Panc1 (cell line): ENCODE measurements at regions of chr10 and their contacts with region 1.

Region 1: DNA sequence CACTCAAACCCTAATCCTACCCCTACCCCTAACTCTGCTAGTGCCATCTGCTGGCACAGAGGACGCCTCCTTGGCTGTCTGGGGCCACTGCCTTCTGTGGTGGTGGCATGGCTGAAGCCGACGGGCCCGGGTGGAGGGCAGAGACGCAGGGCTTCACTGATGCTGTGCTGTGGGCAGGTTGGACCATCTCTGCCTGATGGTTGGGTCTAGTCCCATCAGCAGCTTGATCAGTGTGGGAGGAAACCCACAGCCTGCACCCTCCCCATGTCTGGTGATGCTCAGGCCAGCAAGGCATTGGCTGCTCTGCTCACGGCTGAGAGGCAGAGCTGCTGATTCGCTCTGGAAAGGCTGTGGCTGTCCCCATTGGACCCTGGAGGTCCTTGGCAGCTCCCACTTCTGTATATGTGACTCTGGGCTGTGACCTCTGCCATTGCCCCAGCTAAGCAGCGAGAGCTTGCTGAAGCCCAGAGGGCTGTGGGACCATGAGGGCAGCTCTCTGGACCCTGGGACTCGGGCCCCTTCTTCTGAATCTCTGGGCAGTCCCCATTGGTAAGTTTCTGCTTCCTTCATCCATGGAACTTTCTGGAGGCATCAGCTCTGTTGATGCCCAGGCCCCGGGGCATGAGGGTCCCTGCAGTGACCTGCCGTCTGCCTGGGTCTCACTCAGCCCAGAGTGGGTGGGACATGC is at the start of gene SCART1:
- DNase-seq: no peak
- ATAC-seq: no peak; the same call in 1 of the 2 replicates
- H3K4me3 ChIP-seq: no peak within 1 kb of the TSS
- H3K27ac ChIP-seq: no peak within 1 kb of the TSS
- H3K4me1 ChIP-seq: no peaks in the 10 kb centered on the region
- H3K27me3 ChIP-seq: no peaks in the 10 kb centered on the region; the same call in 1 of the 2 replicates
- CTCF ChIP-seq: no peak
- total RNA-seq, gene SCART1: 0.57 TPM

Region 2: GRCh38 chr10:133557527-133557926 is 103.9 kb after region 1 on chr10:
- CTCF ChIA-PET with region 1: no interaction called
- POLR2A ChIA-PET with region 1: interaction called, 10 read pairs
- in situ Hi-C with region 1: no loop called
- intact Hi-C with region 1: no loop called
- DNase-seq: no peak
- ATAC-seq: no peak
- H3K4me3 ChIP-seq: no peak overlapping the region
- H3K27ac ChIP-seq: no peak overlapping the region
- H3K4me1 ChIP-seq: no peaks in the 10 kb centered on the region
- H3K27me3 ChIP-seq: peaks cover 17% of the 10 kb centered on the region
- CTCF ChIP-seq: no peak; the same call in 1 of the 2 replicates